ENCODE measurements at regions of chr3 and their contacts with region 1.

Region 1: DNA sequence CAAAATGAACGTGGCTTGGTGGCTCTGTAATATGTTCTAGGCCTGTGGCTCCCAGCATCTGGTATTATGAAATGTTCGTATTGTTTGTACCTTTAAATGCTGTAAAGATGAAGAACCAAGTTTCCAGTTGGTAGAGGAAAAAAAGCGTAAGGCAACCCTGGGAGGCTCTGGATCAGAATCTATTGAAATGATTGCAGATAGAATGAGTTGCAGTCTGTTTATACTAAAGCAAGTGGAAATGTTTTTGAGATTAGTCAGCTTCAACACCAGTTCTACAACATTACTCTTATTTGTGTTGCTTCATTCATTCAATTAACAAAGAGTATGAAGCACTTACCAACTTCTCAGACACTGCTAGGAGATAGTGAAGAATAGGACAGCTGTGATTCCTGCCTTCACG is 5.3 kb downstream of the ARL6IP5 start:
- DNase-seq: peak; percentile 86
- H3K4me3 ChIP-seq: no peak overlapping the region
- H3K27ac ChIP-seq: peak overlapping the region; percentile 30
- H3K4me1 ChIP-seq: peaks cover 76% of the 10 kb centered on the region
- H3K27me3 ChIP-seq: no peaks in the 10 kb centered on the region
- CTCF ChIP-seq: no peak
- POLR2A ChIP-seq: no peak

Region 2: GRCh38 chr3:69020857-69021256 is 69.2 kb before region 1 on chr3:
- CTCF ChIA-PET with region 1: no interaction called
- POLR2A ChIA-PET with region 1: no interaction called
- dilution Hi-C with region 1: no loop called
- intact Hi-C with region 1: no loop called
- DNase-seq: no peak
- H3K4me3 ChIP-seq: no peak overlapping the region
- H3K27ac ChIP-seq: no peak overlapping the region
- H3K4me1 ChIP-seq: peaks cover 5% of the 10 kb centered on the region
- H3K27me3 ChIP-seq: no peaks in the 10 kb centered on the region
- CTCF ChIP-seq: no peak
- POLR2A ChIP-seq: no peak

Region 3: GRCh38 chr3:69104996-69105719 is 15.1 kb after region 1 on chr3:
- CTCF ChIA-PET with region 1: interaction called, 8 read pairs
- POLR2A ChIA-PET with region 1: interaction called, 6 read pairs
- dilution Hi-C with region 1: no loop called
- intact Hi-C with region 1: loop called (anchors 2 kb)
- DNase-seq: no peak
- H3K4me3 ChIP-seq: no peak overlapping the region
- H3K27ac ChIP-seq: no peak overlapping the region
- H3K4me1 ChIP-seq: peaks cover 11% of the 10 kb centered on the region
- H3K27me3 ChIP-seq: no peaks in the 10 kb centered on the region
- CTCF ChIP-seq: no peak
- POLR2A ChIP-seq: no peak

Measured in endothelial cell of umbilical vein (primary cell).